ENCODE measurements at regions of chr9 and their contacts with region 1.

Region 1: DNA sequence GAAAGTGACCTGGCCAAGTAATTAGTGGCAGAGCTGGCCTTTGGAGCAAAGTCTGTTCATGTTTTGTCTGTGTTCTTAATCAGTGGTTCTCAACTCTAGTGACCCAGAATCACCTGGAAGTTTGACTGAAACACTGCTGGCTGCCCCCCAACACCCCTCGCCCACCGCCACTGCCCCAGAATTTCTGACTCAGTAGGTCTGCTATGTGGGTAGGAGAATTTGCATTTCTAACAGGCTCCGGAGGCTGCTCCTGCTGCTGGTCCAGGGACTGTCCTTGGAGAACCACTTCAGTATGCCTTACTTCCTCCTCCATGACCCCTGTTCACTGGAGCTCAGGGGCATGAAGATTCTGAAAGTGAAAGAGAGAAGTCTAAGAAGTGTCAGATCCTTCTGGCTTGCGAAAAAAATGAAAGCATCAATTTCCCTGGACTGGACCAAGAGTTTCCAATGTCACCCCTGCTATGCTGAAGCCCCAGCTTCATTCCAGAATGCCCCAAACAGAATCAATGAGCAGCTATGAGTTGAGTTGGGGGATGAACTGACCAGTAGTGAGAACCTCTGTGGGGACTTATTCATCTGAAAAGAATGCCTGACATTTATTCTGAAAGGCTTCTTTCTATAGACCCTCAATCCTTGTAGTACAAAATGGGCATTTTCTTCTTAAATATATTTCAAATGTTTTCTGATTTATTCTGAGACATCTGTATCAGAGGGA is 20.8 kb upstream of the COL15A1 start:
- DNase-seq: no peak
- H3K4me3 ChIP-seq: no peak overlapping the region
- H3K27ac ChIP-seq: no peak overlapping the region
- H3K4me1 ChIP-seq: no peaks in the 10 kb centered on the region
- H3K27me3 ChIP-seq: no peaks in the 10 kb centered on the region
- CTCF ChIP-seq: no peak
- POLR2A ChIP-seq: no peak

Region 2: DNA sequence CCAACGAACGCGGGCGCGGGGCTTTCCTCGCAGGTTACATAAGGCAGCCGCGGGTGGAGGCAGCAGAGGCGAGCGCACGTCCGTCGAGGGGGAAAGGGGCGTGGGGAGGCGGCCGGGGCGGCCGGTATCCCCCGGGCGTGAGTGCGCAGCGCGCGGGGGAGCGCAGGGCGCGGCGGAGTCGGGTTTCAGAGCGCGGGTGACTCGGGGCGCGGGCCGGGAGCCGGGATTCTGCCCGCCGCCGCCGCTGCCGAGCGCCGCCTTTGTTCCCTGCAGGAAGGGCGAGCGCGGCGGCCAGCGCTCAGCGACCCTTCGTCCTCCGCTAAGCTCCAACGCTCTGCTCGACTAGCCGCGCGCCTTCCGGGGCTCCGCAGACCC is 20.8 kb after region 1 on chr9 and contains the start of gene COL15A1:
- intact Hi-C with region 1: loop called (anchors 2 kb)
- DNase-seq: no peak
- H3K4me3 ChIP-seq: peak within 1 kb of the TSS; percentile 56 to 67 (median 65)
- H3K27ac ChIP-seq: peak within 1 kb of the TSS; percentile 42 to 81
- H3K4me1 ChIP-seq: peaks cover 0 to 5% of the 10 kb centered on the region in 2 donors
- H3K27me3 ChIP-seq: peaks cover 0 to 42% of the 10 kb centered on the region in 2 donors
- CTCF ChIP-seq: no peak
- POLR2A ChIP-seq: no peak
- total RNA-seq, gene COL15A1: 13.9 to 47.8 (median 32.4) TPM

Measured in breast epithelium (tissue), 4 donors.